Right lobe of liver (tissue), 6 donors: ENCODE measurements at regions of chr2 and their contacts with region 1.

Region 1: DNA sequence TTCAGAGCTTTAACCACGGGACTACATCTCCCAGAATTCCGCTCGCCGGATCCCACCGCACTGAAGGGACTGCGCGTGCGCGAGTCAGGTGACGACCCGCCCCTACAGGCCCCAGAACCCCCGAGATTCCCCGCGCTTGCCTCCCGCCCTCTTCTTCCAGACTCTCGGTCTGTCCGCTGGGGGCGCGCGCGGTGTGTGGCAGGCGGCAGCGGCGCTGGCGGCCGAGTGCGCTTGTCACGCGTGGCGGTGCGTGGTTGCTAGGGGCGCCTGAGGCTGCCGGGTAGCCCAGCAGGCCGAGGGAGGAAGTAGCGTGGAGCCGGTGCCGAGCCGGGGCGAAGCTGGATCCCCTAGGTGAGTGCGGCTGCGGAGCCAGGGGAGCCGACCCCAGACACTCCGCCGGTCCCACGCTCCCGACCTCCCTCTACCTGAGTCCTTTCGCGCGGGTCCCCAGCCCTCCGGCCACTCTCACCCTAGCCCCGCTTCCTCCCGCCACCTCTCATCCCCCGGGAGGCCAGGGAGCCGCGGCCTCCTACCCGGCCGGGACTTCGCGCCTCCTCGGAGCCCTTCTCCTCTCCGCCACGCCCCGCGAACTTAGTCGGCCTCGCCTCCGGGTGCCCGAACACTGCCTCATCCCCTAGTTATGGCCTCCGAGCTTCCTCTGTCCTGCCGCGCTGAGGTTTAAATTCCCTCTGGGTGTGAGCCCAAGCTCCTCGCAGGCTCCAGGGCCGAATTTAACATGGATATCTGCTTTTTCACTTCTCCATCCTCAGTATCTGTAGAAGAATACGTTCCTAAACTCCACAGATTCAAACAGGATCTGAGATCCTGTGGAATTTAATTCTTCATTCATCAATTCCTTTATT is at the start of gene TTLL4:
- DNase-seq: peak; percentile 99
- ATAC-seq: peak; percentile 98 to 99 (median 99)
- H3K4me3 ChIP-seq: peak within 1 kb of the TSS; percentile 82 to 91 (median 89)
- H3K27ac ChIP-seq: peak within 1 kb of the TSS; percentile 73 to 92 (median 86)
- H3K4me1 ChIP-seq: peaks cover 0 to 8% (median 0%) of the 10 kb centered on the region in 4 donors
- H3K27me3 ChIP-seq: no peaks in the 10 kb centered on the region
- CTCF ChIP-seq: peak; percentile 89 to 94 (median 90)
- POLR2A ChIP-seq: peak; percentile 70
- total RNA-seq, gene TTLL4: 8.2 to 14.8 (median 11.6) TPM

Region 2: DNA sequence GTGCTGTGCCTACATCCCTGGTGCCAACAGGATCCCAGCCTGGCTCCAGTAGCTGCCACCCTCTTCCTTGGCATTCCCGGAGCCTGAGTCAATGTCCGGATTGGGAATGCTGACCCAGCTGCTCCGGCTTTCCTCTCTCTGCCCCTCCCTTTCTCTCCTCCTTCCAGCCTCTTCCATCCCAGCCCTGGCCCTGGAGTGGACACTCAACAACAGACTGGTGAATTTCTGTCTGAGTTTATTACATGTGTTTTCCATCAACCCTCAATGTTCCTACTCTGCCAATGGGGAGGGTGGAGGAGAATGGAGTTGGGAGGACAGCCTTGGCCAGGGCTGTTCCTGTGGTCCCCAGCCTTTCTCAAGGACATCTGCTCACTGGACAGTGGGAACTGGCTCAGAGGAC is 121.6 kb after region 1 on chr2:
- intact Hi-C with region 1: loop called in 1 of 2 experiments (anchors 10 kb)
- DNase-seq: no peak
- ATAC-seq: no peak
- H3K4me3 ChIP-seq: no peak overlapping the region
- H3K27ac ChIP-seq: no peak overlapping the region
- H3K4me1 ChIP-seq: no peaks in the 10 kb centered on the region
- H3K27me3 ChIP-seq: no peaks in the 10 kb centered on the region
- CTCF ChIP-seq: no peak
- POLR2A ChIP-seq: no peak

Region 3: GRCh38 chr2:218944759-218945404 is 234.0 kb after region 1 on chr2:
- intact Hi-C with region 1: no loop called
- DNase-seq: no peak
- ATAC-seq: no peak
- H3K4me3 ChIP-seq: no peak overlapping the region
- H3K27ac ChIP-seq: no peak overlapping the region
- H3K4me1 ChIP-seq: no peaks in the 10 kb centered on the region
- H3K27me3 ChIP-seq: no peaks in the 10 kb centered on the region
- CTCF ChIP-seq: no peak
- POLR2A ChIP-seq: no peak